ENCODE measurements at regions of chr16 and their contacts with region 1.

Region 1: GRCh38 chr16:71927383-71927782 is 32.1 kb downstream of the IST1 start:
- DNase-seq: peak; percentile 90
- H3K4me3 ChIP-seq: no peak overlapping the region
- H3K27ac ChIP-seq: peak overlapping the region; percentile 75
- H3K4me1 ChIP-seq: peaks cover 55% of the 10 kb centered on the region
- H3K27me3 ChIP-seq: no peaks in the 10 kb centered on the region
- CTCF ChIP-seq: no peak
- POLR2A ChIP-seq: peak; percentile 27

Region 2: GRCh38 chr16:71669932-71670536 is 257.3 kb before region 1 on chr16:
- CTCF ChIA-PET with region 1: no interaction called
- POLR2A ChIA-PET with region 1: no interaction called
- dilution Hi-C with region 1: no loop called
- intact Hi-C with region 1: no loop called
- DNase-seq: no peak
- H3K4me3 ChIP-seq: no peak overlapping the region
- H3K27ac ChIP-seq: no peak overlapping the region
- H3K4me1 ChIP-seq: no peaks in the 10 kb centered on the region
- H3K27me3 ChIP-seq: no peaks in the 10 kb centered on the region
- CTCF ChIP-seq: no peak
- POLR2A ChIP-seq: no peak

Region 3: GRCh38 chr16:71754652-71755051 is 172.7 kb before region 1 on chr16:
- CTCF ChIA-PET with region 1: no interaction called
- POLR2A ChIA-PET with region 1: no interaction called
- dilution Hi-C with region 1: no loop called
- intact Hi-C with region 1: no loop called
- DNase-seq: no peak
- H3K4me3 ChIP-seq: no peak overlapping the region
- H3K27ac ChIP-seq: no peak overlapping the region
- H3K4me1 ChIP-seq: no peaks in the 10 kb centered on the region
- H3K27me3 ChIP-seq: no peaks in the 10 kb centered on the region
- CTCF ChIP-seq: no peak
- POLR2A ChIP-seq: no peak

Region 4: GRCh38 chr16:72008424-72009216 is 81.2 kb after region 1 on chr16 and contains the start of gene DHODH:
- CTCF ChIA-PET with region 1: no interaction called
- POLR2A ChIA-PET with region 1: no interaction called
- dilution Hi-C with region 1: no loop called
- intact Hi-C with region 1: loop called (anchors 1 kb)
- DNase-seq: peak; percentile 99
- H3K4me3 ChIP-seq: peak within 1 kb of the TSS; percentile 22 to 73 (median 47)
- H3K27ac ChIP-seq: no peak within 1 kb of the TSS
- H3K4me1 ChIP-seq: peaks cover 2% of the 10 kb centered on the region
- H3K27me3 ChIP-seq: no peaks in the 10 kb centered on the region
- CTCF ChIP-seq: peak in 1 of 2 donors; percentile 1
- POLR2A ChIP-seq: peak; percentile 84
- total RNA-seq, gene DHODH: 9.2 and 9.7 TPM in 2 replicates

Measured in endothelial cell of umbilical vein (primary cell).